ENCODE measurements at regions of chr19 and their contacts with region 1.

Region 1: GRCh38 chr19:8352134-8352827 is 9.2 kb upstream of the KANK3 start:
- DNase-seq: no peak
- H3K4me3 ChIP-seq: peak overlapping the region in 2 of 3 donors; percentile 13 to 32
- H3K27ac ChIP-seq: no peak overlapping the region
- H3K4me1 ChIP-seq: peaks cover 0 to 5% of the 10 kb centered on the region in 2 donors
- H3K27me3 ChIP-seq: no peaks in the 10 kb centered on the region
- CTCF ChIP-seq: no peak
- POLR2A ChIP-seq: no peak

Region 2: DNA sequence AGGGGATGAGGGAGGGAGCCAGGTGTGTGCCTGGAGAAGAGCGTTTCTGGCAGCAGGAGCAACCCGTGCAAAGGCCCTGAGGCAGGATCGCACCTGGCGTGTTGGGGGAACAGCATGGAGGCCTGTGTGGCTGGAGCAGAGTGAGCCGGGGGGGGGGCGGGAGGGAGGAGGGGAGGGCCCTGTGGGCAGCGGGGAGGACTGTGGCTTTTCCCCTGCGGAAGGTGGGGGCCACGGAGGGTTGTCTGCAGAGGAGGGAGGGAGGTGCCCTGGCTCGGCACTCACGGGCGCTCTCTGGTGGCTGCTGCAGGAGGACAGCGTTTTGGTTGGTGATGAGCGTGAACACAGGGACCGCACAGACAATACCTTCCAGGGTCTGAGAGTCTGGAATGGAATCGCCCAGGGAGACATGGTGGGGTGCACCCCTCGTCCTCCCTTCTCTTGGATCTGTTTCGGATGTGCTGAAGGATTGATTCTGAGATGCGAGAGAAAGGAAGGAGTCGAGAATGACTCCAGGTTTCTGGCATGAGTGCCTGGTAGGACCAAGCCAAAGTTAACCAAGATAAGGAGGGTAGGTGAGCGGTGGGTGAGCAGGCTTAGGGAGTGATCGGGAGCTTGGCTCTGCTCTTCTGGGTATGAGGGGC is 44.4 kb after region 1 on chr19:
- intact Hi-C with region 1: loop called (anchors 5 kb)
- DNase-seq: peak; percentile 79
- H3K4me3 ChIP-seq: peak overlapping the region in 2 of 3 donors; percentile 24 to 37
- H3K27ac ChIP-seq: peak overlapping the region; percentile 100
- H3K4me1 ChIP-seq: peaks cover 14 to 45% of the 10 kb centered on the region in 2 donors
- H3K27me3 ChIP-seq: no peaks in the 10 kb centered on the region
- CTCF ChIP-seq: peak; percentile 13 to 75 (median 54)
- POLR2A ChIP-seq: no peak